HepG2 (cell line): ENCODE measurements at regions of chr3 and their contacts with region 1.

Region 1: GRCh38 chr3:192566706-192567290 is 160.5 kb downstream of the FGF12 start:
- DNase-seq: peak; percentile 45
- ATAC-seq: peak; percentile 91
- H3K4me3 ChIP-seq: no peak overlapping the region
- H3K27ac ChIP-seq: no peak overlapping the region
- H3K4me1 ChIP-seq: no peaks in the 10 kb centered on the region
- H3K27me3 ChIP-seq: 0 out of 5 replicates have a peak, but pooled peaks cover 0 to 4% of the 10 kb centered on the region in 2 experiments
- CTCF ChIP-seq: peak; percentile 69
- EP300 ChIP-seq: no peak
- POLR2A ChIP-seq: no peak
- RAD21 ChIP-seq: peak; percentile 60; the same call in 1 of the 2 replicates

Region 2: DNA sequence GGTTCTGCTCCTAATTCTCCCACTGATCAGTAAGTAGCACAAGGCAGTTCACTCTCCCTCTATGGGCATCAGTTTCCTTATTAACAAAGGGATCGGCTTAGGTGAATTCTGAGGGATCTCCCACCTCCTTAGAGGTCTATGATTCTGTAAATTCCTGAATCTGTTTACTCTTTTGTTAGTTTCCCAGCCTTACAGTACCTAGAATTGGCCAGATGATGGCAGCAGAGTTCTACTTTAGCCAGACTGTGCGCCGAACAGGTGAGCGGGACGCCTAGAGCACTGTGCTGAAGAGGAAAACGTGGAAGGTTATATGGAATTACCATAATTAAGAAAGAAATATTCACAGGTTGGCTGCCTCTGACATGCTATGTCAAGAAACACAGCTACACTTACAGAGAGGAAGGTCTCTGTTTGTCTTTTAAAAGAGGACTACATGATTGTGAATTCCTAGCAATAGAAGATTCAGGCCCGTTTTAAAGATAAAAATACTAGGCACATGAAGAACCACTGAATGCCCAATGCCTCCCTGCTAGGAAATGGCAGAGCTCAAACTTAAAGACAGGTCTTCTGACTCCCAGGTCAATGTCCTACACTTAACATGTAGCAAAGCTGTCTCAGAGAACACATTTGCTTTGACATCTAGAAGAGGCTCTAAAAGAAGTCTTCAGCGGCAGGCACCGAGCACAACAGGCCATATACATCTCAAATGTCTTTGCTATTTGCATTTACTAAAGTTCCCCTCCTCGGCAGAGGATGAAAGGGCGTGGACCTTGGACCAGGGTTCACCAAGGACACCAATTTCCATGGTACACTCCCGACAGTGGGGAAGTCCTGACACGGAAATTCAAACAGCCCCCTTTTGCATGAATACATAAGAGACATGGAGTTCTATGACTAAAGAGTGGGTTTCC is 99.3 kb before region 1 on chr3:
- CTCF ChIA-PET with region 1: no interaction called
- POLR2A ChIA-PET with region 1: no interaction called
- in situ Hi-C with region 1: no loop called
- intact Hi-C with region 1: loop called (anchors 1 kb)
- DNase-seq: peak; percentile 51
- ATAC-seq: peak; percentile 96
- H3K4me3 ChIP-seq: no peak overlapping the region
- H3K27ac ChIP-seq: no peak overlapping the region
- H3K4me1 ChIP-seq: peaks cover 5% of the 10 kb centered on the region; the same call in 1 of the 2 replicates
- H3K27me3 ChIP-seq: no peaks in the 10 kb centered on the region; a peak in 1 of 5 replicates
- CTCF ChIP-seq: peak; percentile 84
- EP300 ChIP-seq: no peak
- POLR2A ChIP-seq: no peak
- RAD21 ChIP-seq: peak; percentile 44; the same call in 1 of the 2 replicates

Region 3: DNA sequence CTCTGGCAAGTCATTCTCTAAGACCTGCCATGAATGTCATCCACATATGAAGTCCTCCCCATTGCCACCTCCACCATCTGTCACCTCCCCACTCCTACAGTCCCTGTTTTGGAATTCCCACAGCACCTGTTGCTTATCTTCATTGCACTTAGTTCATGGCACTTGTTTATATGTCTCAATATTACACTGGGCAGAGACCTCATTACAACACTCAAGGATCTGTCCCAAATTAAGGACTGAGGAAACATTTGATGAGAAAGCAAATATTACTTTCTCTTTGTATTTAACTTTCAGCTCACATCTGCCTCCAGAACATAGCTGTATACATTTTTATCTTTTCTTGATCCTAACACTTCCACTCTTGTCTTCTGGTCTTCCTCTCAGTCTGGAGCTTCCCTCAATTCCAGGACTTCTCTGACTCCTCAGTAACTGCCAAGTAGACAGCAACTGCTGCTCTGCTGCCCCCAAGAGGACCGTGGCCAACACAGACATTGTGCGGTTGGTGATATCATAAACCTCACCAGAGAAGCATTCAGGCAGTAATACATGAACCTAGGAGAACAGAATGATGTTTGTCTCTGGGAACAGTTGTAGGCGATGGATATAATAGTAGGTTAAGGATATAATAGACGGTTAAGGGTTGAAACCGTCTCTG is 205.6 kb after region 1 on chr3:
- CTCF ChIA-PET with region 1: no interaction called
- POLR2A ChIA-PET with region 1: no interaction called
- in situ Hi-C with region 1: no loop called
- intact Hi-C with region 1: loop called (anchors 1 kb)
- DNase-seq: peak; percentile 2
- ATAC-seq: peak; percentile 85
- H3K4me3 ChIP-seq: no peak overlapping the region
- H3K27ac ChIP-seq: no peak overlapping the region
- H3K4me1 ChIP-seq: no peaks in the 10 kb centered on the region
- H3K27me3 ChIP-seq: no peaks in the 10 kb centered on the region; a peak in 1 of 5 replicates
- CTCF ChIP-seq: peak; percentile 54
- EP300 ChIP-seq: no peak
- POLR2A ChIP-seq: no peak
- RAD21 ChIP-seq: no peak

Region 4: GRCh38 chr3:192802957-192803899 is 236.4 kb after region 1 on chr3:
- CTCF ChIA-PET with region 1: interaction called, 37 read pairs
- POLR2A ChIA-PET with region 1: no interaction called
- in situ Hi-C with region 1: loop called (anchors 5 kb)
- intact Hi-C with region 1: loop called (anchors 1 kb)
- DNase-seq: peak; percentile 27
- ATAC-seq: peak; percentile 76
- H3K4me3 ChIP-seq: no peak overlapping the region
- H3K27ac ChIP-seq: no peak overlapping the region
- H3K4me1 ChIP-seq: no peaks in the 10 kb centered on the region
- H3K27me3 ChIP-seq: no peaks in the 10 kb centered on the region
- CTCF ChIP-seq: peak; percentile 62
- EP300 ChIP-seq: no peak
- POLR2A ChIP-seq: no peak
- RAD21 ChIP-seq: peak; percentile 28; the same call in 1 of the 2 replicates

Region 5: GRCh38 chr3:193040836-193041672 is 474.3 kb after region 1 on chr3:
- CTCF ChIA-PET with region 1: interaction called, 4 read pairs
- POLR2A ChIA-PET with region 1: no interaction called
- in situ Hi-C with region 1: loop called (anchors 10 kb)
- intact Hi-C with region 1: loop called (anchors 10 kb)
- DNase-seq: peak; percentile 24
- ATAC-seq: peak; percentile 60; the same call in 2 of the 3 replicates
- H3K4me3 ChIP-seq: no peak overlapping the region
- H3K27ac ChIP-seq: no peak overlapping the region
- H3K4me1 ChIP-seq: no peaks in the 10 kb centered on the region
- H3K27me3 ChIP-seq: no peaks in the 10 kb centered on the region
- CTCF ChIP-seq: peak; percentile 58
- EP300 ChIP-seq: no peak
- POLR2A ChIP-seq: no peak
- RAD21 ChIP-seq: no peak

Region 6: DNA sequence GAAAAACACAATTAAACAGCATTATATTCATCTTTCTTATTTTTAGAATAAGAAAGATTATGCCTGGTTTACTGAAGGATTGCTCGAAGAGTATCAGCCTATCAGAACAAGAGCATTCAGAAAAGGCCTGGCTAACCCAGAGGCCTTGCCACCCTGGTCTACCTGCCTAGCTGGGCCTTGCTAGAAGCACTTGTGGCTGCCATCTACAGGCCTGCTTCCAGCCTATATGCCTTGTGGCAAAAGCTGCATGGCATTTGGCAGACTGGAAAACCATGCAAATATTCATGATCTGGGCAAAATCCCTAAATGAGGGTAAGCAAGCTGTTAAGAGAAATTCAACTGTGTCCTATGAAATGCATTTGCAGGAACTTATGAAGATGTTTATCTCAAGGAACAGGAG is 997.2 kb after region 1 on chr3:
- CTCF ChIA-PET with region 1: no interaction called
- POLR2A ChIA-PET with region 1: no interaction called
- in situ Hi-C with region 1: loop called (anchors 25 kb)
- intact Hi-C with region 1: loop called (anchors 2 kb)
- DNase-seq: peak; percentile 9
- ATAC-seq: peak; percentile 88
- H3K4me3 ChIP-seq: no peak overlapping the region
- H3K27ac ChIP-seq: no peak overlapping the region
- H3K4me1 ChIP-seq: no peaks in the 10 kb centered on the region
- H3K27me3 ChIP-seq: no peaks in the 10 kb centered on the region
- CTCF ChIP-seq: peak; percentile 23
- EP300 ChIP-seq: no peak
- POLR2A ChIP-seq: no peak
- RAD21 ChIP-seq: no peak

Region 7: DNA sequence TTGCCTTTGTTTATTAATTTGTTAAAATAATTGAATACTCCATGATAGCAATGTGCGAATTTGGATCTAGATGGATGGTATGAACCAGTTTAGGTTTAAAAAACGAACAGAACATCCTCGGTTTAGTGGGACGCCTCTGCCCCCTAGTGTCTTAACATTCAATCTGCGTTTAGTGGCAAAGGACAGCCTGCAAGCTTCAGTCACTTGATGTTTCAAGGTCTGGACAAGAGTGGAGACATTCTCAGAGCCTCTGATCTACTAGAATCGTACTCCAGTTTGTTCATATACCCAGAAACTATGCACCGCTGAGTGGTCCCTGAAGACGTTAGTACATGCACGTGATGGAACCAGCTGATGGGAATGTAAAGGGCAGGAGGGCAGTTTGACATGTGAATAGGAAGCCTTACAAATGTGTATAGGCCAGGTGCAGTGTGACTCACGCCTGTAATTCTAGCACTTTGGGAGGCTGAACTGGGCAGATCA is 1005.7 kb after region 1 on chr3:
- CTCF ChIA-PET with region 1: interaction called, 7 read pairs
- POLR2A ChIA-PET with region 1: no interaction called
- in situ Hi-C with region 1: loop called (anchors 25 kb)
- intact Hi-C with region 1: loop called (anchors 1 kb)
- DNase-seq: peak; percentile 44
- ATAC-seq: peak; percentile 91
- H3K4me3 ChIP-seq: no peak overlapping the region
- H3K27ac ChIP-seq: no peak overlapping the region
- H3K4me1 ChIP-seq: no peaks in the 10 kb centered on the region
- H3K27me3 ChIP-seq: 0 out of 5 replicates have a peak, but pooled peaks cover 0 to 2% of the 10 kb centered on the region in 2 experiments
- CTCF ChIP-seq: peak; percentile 86
- EP300 ChIP-seq: no peak
- POLR2A ChIP-seq: no peak
- RAD21 ChIP-seq: peak; percentile 68; the same call in 1 of the 2 replicates